ENCODE measurements at regions of chr10 and their contacts with region 1.

Region 1: GRCh38 chr10:7525314-7526016 is 114.6 kb upstream of the SFMBT2 start:
- DNase-seq: peak in 1 of 2 donors; percentile 58
- H3K4me3 ChIP-seq: no peak overlapping the region
- H3K27ac ChIP-seq: no peak overlapping the region
- H3K4me1 ChIP-seq: peaks cover 0 to 3% (median 0%) of the 10 kb centered on the region in 4 donors
- H3K27me3 ChIP-seq: peaks cover 0 to 40% of the 10 kb centered on the region in 2 donors
- CTCF ChIP-seq: peak; percentile 72 to 90

Region 2: GRCh38 chr10:7593063-7593462 is 67.6 kb after region 1 on chr10:
- intact Hi-C with region 1: no loop called
- DNase-seq: peak; percentile 32 to 89
- H3K4me3 ChIP-seq: no peak overlapping the region
- H3K27ac ChIP-seq: peak overlapping the region; percentile 52 to 75
- H3K4me1 ChIP-seq: peaks cover 0 to 13% (median 10%) of the 10 kb centered on the region in 4 donors
- H3K27me3 ChIP-seq: no peaks in the 10 kb centered on the region
- CTCF ChIP-seq: no peak

Region 3: DNA sequence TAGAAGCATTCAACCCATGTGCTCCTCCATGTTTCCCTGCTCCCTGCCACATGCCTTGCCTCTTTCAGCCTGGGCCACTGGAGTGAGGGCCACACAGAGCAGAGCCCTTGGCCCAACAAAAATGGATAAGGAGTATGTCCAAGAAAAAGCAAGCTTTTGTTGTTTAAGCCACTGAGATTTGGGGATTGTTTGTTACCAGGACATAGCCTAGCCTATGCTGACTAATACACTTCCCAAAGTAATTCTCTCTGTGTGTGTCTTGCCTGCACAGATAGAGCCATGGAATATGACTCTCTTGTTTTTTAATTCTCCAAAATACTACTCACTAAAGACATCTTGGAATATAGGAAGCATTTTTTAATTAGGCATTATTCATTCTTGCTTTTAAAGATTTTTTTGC is 164.1 kb after region 1 on chr10:
- intact Hi-C with region 1: loop called (anchors 2 kb)
- DNase-seq: no peak
- H3K4me3 ChIP-seq: no peak overlapping the region
- H3K27ac ChIP-seq: no peak overlapping the region
- H3K4me1 ChIP-seq: no peaks in the 10 kb centered on the region
- H3K27me3 ChIP-seq: no peaks in the 10 kb centered on the region
- CTCF ChIP-seq: no peak